IMR-90 (cell line): ENCODE measurements at regions of chr5 and their contacts with region 1.

Region 1: GRCh38 chr5:9544502-9545135 is 1.3 kb downstream of the SEMA5A start:
- DNase-seq: peak; percentile 80
- ATAC-seq: peak; percentile 48
- H3K4me3 ChIP-seq: peak overlapping the region; percentile 73
- H3K27ac ChIP-seq: peak overlapping the region; percentile 35
- H3K4me1 ChIP-seq: peaks cover 4% of the 10 kb centered on the region
- H3K27me3 ChIP-seq: no peaks in the 10 kb centered on the region
- CTCF ChIP-seq: peak; percentile 96
- POLR2A ChIP-seq: 0 out of 2 replicates have a peak, but pooled peaks have one; percentile 42
- RAD21 ChIP-seq: peak; percentile 91

Region 2: GRCh38 chr5:8340739-8341344 is 1203.8 kb before region 1 on chr5:
- CTCF ChIA-PET with region 1: no interaction called
- POLR2A ChIA-PET with region 1: no interaction called
- dilution Hi-C with region 1: no loop called
- in situ Hi-C with region 1: no loop called
- intact Hi-C with region 1: loop called (anchors 5 kb)
- DNase-seq: peak; percentile 23
- ATAC-seq: peak; percentile 94
- H3K4me3 ChIP-seq: no peak overlapping the region
- H3K27ac ChIP-seq: no peak overlapping the region
- H3K4me1 ChIP-seq: no peaks in the 10 kb centered on the region
- H3K27me3 ChIP-seq: no peaks in the 10 kb centered on the region; the same call in 1 of the 2 replicates
- CTCF ChIP-seq: peak; percentile 62
- POLR2A ChIP-seq: no peak
- RAD21 ChIP-seq: peak; percentile 58

Region 3: GRCh38 chr5:8436924-8437323 is 1107.7 kb before region 1 on chr5:
- CTCF ChIA-PET with region 1: no interaction called
- POLR2A ChIA-PET with region 1: no interaction called
- dilution Hi-C with region 1: no loop called
- in situ Hi-C with region 1: no loop called
- intact Hi-C with region 1: no loop called
- DNase-seq: no peak
- ATAC-seq: no peak
- H3K4me3 ChIP-seq: no peak overlapping the region
- H3K27ac ChIP-seq: no peak overlapping the region
- H3K4me1 ChIP-seq: no peaks in the 10 kb centered on the region
- H3K27me3 ChIP-seq: no peaks in the 10 kb centered on the region
- CTCF ChIP-seq: no peak
- POLR2A ChIP-seq: no peak
- RAD21 ChIP-seq: no peak

Region 4: DNA sequence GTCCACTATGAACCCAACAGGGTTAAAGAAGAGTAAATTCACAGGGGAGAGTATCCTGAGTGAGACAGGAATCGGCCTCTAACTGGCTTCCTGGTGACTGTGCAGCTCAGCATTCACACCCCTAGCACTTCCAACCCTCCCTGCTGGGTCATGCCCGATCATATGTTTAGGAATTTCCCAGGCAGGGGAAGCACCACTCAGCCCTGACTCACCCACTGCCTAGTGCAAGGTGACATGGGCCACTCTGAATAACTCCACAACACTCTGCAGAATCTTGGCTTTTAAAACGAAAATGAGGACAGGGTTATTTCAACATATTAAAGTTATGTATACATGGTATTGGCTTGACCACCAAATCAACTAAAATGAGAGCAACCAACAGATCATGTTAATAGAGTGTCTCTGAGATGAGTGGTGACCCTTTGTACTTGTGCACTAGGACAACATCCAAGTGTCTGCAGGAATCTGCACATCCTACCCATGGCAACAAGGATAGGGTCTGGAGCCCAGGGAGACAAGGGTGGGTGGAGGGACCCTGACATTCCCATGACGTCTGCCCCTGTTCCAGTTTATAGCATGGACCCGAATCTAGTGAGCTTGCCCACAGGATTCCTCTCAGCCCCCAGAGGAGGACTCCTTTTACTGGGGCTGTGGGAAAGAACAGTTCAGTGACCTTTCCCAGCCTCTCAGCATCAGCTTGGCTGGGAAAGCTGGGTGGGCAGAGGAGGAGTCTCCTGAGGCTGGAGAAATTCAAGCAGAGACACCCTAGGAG is 484.5 kb before region 1 on chr5:
- CTCF ChIA-PET with region 1: interaction called, 3 read pairs
- POLR2A ChIA-PET with region 1: no interaction called
- dilution Hi-C with region 1: no loop called
- in situ Hi-C with region 1: no loop called
- intact Hi-C with region 1: loop called (anchors 10 kb)
- DNase-seq: peak; percentile 99
- ATAC-seq: peak; percentile 95
- H3K4me3 ChIP-seq: no peak overlapping the region
- H3K27ac ChIP-seq: peak overlapping the region; percentile 85
- H3K4me1 ChIP-seq: peaks cover 21% of the 10 kb centered on the region
- H3K27me3 ChIP-seq: no peaks in the 10 kb centered on the region
- CTCF ChIP-seq: 0 out of 2 replicates have a peak, but pooled peaks have one; percentile 5
- POLR2A ChIP-seq: peak; percentile 27
- RAD21 ChIP-seq: peak; percentile 35

Region 5: DNA sequence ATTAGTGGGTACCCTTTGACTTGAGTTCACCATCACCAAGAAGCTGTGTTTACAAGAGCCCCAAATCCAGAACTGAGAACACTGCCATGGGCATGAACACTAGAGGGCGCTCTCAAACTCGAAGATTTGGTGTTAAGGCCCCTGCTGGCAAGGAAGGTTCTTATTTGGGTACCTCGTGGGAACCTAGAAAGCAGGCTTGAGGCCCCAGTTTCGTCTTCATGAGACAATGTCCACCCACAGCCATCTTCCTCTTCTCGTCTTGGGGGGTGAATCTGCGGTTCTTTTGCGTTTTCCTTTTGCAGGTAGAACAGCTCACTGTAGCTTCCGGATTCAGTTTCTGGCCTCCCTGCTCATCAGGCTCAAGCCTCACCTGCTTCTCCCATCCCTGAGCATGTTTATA is 182.8 kb before region 1 on chr5:
- CTCF ChIA-PET with region 1: interaction called, 3 read pairs
- POLR2A ChIA-PET with region 1: no interaction called
- dilution Hi-C with region 1: no loop called
- in situ Hi-C with region 1: no loop called
- intact Hi-C with region 1: loop called (anchors 1 kb)
- DNase-seq: peak; percentile 46
- ATAC-seq: no peak
- H3K4me3 ChIP-seq: no peak overlapping the region
- H3K27ac ChIP-seq: no peak overlapping the region
- H3K4me1 ChIP-seq: peaks cover 14% of the 10 kb centered on the region
- H3K27me3 ChIP-seq: no peaks in the 10 kb centered on the region
- CTCF ChIP-seq: peak; percentile 55
- POLR2A ChIP-seq: no peak
- RAD21 ChIP-seq: peak; percentile 51

Region 6: GRCh38 chr5:9924614-9925013 is 380.0 kb after region 1 on chr5:
- CTCF ChIA-PET with region 1: no interaction called
- POLR2A ChIA-PET with region 1: no interaction called
- dilution Hi-C with region 1: no loop called
- in situ Hi-C with region 1: no loop called
- intact Hi-C with region 1: loop called (anchors 10 kb)
- DNase-seq: peak; percentile 99
- ATAC-seq: peak; percentile 90
- H3K4me3 ChIP-seq: no peak overlapping the region
- H3K27ac ChIP-seq: peak overlapping the region; percentile 83
- H3K4me1 ChIP-seq: peaks cover 10% of the 10 kb centered on the region
- H3K27me3 ChIP-seq: no peaks in the 10 kb centered on the region
- CTCF ChIP-seq: no peak
- POLR2A ChIP-seq: 0 out of 2 replicates have a peak, but pooled peaks have one; percentile 35
- RAD21 ChIP-seq: peak; percentile 8; the same call in 1 of the 2 replicates

Region 7: GRCh38 chr5:10233505-10233904 is 688.9 kb after region 1 on chr5:
- CTCF ChIA-PET with region 1: no interaction called
- POLR2A ChIA-PET with region 1: no interaction called
- dilution Hi-C with region 1: no loop called
- in situ Hi-C with region 1: no loop called
- intact Hi-C with region 1: loop called (anchors 5 kb)
- DNase-seq: peak; percentile 97
- ATAC-seq: peak; percentile 97
- H3K4me3 ChIP-seq: no peak overlapping the region
- H3K27ac ChIP-seq: peak overlapping the region; percentile 69
- H3K4me1 ChIP-seq: peaks cover 14% of the 10 kb centered on the region
- H3K27me3 ChIP-seq: no peaks in the 10 kb centered on the region
- CTCF ChIP-seq: peak; percentile 73
- POLR2A ChIP-seq: 0 out of 2 replicates have a peak, but pooled peaks have one; percentile 35
- RAD21 ChIP-seq: peak; percentile 88